B cell (primary cell): ENCODE measurements at regions of chr15 and their contacts with region 1.

Region 1: GRCh38 chr15:66401130-66402021 is 14.7 kb downstream of the MAP2K1 start:
- DNase-seq: peak; percentile 10
- ATAC-seq: peak; percentile 39
- H3K4me3 ChIP-seq: peak overlapping the region in 2 of 5 experiments; percentile 15 to 17
- H3K4me3 Mint-ChIP-seq: peak overlapping the region; percentile 83
- H3K27ac ChIP-seq: no peak overlapping the region
- H3K27ac Mint-ChIP-seq: peak overlapping the region; percentile 50
- H3K4me1 ChIP-seq: peaks cover 36 to 46% of the 10 kb centered on the region in 2 donors
- H3K4me1 Mint-ChIP-seq: peaks cover 54% of the 10 kb centered on the region
- H3K27me3 ChIP-seq: no peaks in the 10 kb centered on the region
- H3K27me3 Mint-ChIP-seq: no peaks in the 10 kb centered on the region
- CTCF ChIP-seq: no peak

Region 2: GRCh38 chr15:66413579-66413978 is 12.2 kb after region 1 on chr15:
- CTCF ChIA-PET with region 1: interaction called, 13 read pairs
- POLR2A ChIA-PET with region 1: no interaction called
- intact Hi-C with region 1: no loop called
- DNase-seq: no peak
- ATAC-seq: no peak
- H3K4me3 ChIP-seq: no peak overlapping the region
- H3K4me3 Mint-ChIP-seq: no peak overlapping the region
- H3K27ac ChIP-seq: no peak overlapping the region
- H3K27ac Mint-ChIP-seq: no peak overlapping the region
- H3K4me1 ChIP-seq: peaks cover 10 to 28% of the 10 kb centered on the region in 2 donors
- H3K4me1 Mint-ChIP-seq: peaks cover 64% of the 10 kb centered on the region
- H3K27me3 ChIP-seq: no peaks in the 10 kb centered on the region
- H3K27me3 Mint-ChIP-seq: no peaks in the 10 kb centered on the region
- CTCF ChIP-seq: no peak

Region 3: GRCh38 chr15:66452971-66453580 is 51.7 kb after region 1 on chr15:
- CTCF ChIA-PET with region 1: no interaction called
- POLR2A ChIA-PET with region 1: no interaction called
- intact Hi-C with region 1: loop called (anchors 10 kb)
- DNase-seq: no peak
- ATAC-seq: no peak
- H3K4me3 ChIP-seq: no peak overlapping the region
- H3K4me3 Mint-ChIP-seq: no peak overlapping the region
- H3K27ac ChIP-seq: no peak overlapping the region
- H3K27ac Mint-ChIP-seq: no peak overlapping the region
- H3K4me1 ChIP-seq: no peaks in the 10 kb centered on the region
- H3K4me1 Mint-ChIP-seq: peaks cover 11% of the 10 kb centered on the region
- H3K27me3 ChIP-seq: no peaks in the 10 kb centered on the region
- H3K27me3 Mint-ChIP-seq: no peaks in the 10 kb centered on the region
- CTCF ChIP-seq: no peak